ENCODE measurements at regions of chr15 and their contacts with region 1.

Region 1: GRCh38 chr15:89430530-89431341 is 65.6 kb downstream of the RHCG start:
- DNase-seq: peak; percentile 71 to 95 (median 88)
- ATAC-seq: peak; percentile 94
- H3K4me3 ChIP-seq: peak overlapping the region; percentile 56
- H3K4me3 Mint-ChIP-seq: peak overlapping the region; percentile 68
- H3K27ac ChIP-seq: no peak overlapping the region
- H3K27ac Mint-ChIP-seq: no peak overlapping the region
- H3K4me1 ChIP-seq: peaks cover 9% of the 10 kb centered on the region
- H3K4me1 Mint-ChIP-seq: no peaks in the 10 kb centered on the region
- H3K27me3 ChIP-seq: peaks cover 2 to 11% of the 10 kb centered on the region in 2 experiments
- H3K27me3 Mint-ChIP-seq: peaks cover 31% of the 10 kb centered on the region
- CTCF ChIP-seq: peak; percentile 97

Region 2: DNA sequence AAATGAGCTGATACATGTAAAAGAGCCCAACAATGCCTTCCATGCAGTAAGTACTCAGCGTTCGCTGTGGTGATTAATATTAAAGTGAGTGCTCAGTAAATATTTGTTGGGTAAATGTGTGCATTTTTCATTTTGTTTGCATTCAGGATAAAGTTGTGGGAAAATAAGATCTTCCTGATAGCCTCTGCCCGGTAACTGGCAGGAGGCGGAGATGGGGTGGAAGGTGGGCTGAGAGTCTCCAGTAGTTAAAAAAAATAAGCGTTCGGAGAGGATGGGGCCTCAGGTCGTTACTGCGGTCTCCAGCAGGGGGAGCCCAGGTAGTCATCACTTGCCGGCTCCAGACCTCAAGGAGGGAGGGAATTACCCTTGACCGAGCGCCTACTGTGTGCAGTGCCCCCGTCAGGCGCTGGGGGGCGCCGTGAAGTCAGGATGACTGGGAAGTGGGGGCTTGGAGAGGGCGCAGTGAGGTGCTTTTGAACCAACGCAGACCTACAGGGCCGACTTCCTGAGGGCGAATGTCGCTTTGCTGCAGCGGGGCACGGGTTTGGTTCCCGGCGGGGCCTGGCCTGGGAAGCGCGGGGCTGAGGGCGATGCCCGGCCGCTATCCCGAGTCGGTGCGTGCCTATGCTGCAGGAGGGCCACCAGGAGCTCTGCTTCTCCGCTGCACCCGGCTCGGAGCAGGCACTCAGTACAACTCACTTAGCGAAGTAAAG is 14.4 kb before region 1 on chr15:
- CTCF ChIA-PET with region 1: interaction called, 7 read pairs
- POLR2A ChIA-PET with region 1: interaction called, 3 read pairs
- intact Hi-C with region 1: loop called in 1 of 2 experiments (anchors 2 kb)
- DNase-seq: peak; percentile 18 to 86 (median 52)
- ATAC-seq: peak; percentile 87
- H3K4me3 ChIP-seq: no peak overlapping the region
- H3K4me3 Mint-ChIP-seq: no peak overlapping the region
- H3K27ac ChIP-seq: no peak overlapping the region
- H3K27ac Mint-ChIP-seq: no peak overlapping the region
- H3K4me1 ChIP-seq: peaks cover 19% of the 10 kb centered on the region
- H3K4me1 Mint-ChIP-seq: peaks cover 16% of the 10 kb centered on the region
- H3K27me3 ChIP-seq: peaks cover 80 to 96% of the 10 kb centered on the region in 2 experiments
- H3K27me3 Mint-ChIP-seq: peaks cover 97% of the 10 kb centered on the region
- CTCF ChIP-seq: peak; percentile 74

Region 3: GRCh38 chr15:89496155-89497098 is 65.7 kb after region 1 on chr15 and contains the start of gene RHCG:
- CTCF ChIA-PET with region 1: no interaction called
- POLR2A ChIA-PET with region 1: no interaction called
- intact Hi-C with region 1: no loop called
- DNase-seq: peak in 3 of 14 experiments; percentile 19 to 34 (median 31)
- ATAC-seq: no peak
- H3K4me3 ChIP-seq: no peak within 1 kb of the TSS
- H3K4me3 Mint-ChIP-seq: peak within 1 kb of the TSS; percentile 25
- H3K27ac ChIP-seq: no peak within 1 kb of the TSS
- H3K27ac Mint-ChIP-seq: no peak within 1 kb of the TSS
- H3K4me1 ChIP-seq: peaks cover 7% of the 10 kb centered on the region
- H3K4me1 Mint-ChIP-seq: no peaks in the 10 kb centered on the region
- H3K27me3 ChIP-seq: peaks cover 47 to 61% of the 10 kb centered on the region in 2 experiments
- H3K27me3 Mint-ChIP-seq: peaks cover 84% of the 10 kb centered on the region
- CTCF ChIP-seq: no peak
- total RNA-seq, gene RHCG: not detected

Measured in CD4-positive, alpha-beta T cell (primary cell).